A673 (cell line): ENCODE measurements at regions of chr3 and their contacts with region 1.

Region 1: DNA sequence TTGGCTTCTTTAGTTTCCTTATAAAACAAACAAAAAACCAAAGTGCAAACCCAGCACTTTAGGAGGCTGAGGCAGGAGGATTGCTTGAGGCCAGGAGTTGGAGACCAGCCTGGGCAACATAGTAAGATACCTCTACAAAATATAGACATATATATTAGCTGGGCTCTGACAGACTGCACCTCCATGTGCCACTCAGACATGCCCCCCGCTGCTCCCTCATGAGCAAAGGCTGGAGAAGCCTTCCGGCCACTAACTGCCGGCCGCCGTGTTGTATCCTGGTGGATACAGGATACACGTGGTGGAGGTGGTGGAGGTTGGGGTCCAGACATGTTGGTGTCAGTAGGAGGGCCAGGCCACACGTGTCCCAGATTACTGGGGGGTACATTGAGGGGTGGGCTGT is 29.4 kb upstream of the CCR4 start:
- DNase-seq: no peak
- H3K4me3 ChIP-seq: no peak overlapping the region
- H3K27ac ChIP-seq: no peak overlapping the region
- H3K4me1 ChIP-seq: no peaks in the 10 kb centered on the region
- H3K27me3 ChIP-seq: peaks cover 8% of the 10 kb centered on the region
- CTCF ChIP-seq: no peak

Region 2: DNA sequence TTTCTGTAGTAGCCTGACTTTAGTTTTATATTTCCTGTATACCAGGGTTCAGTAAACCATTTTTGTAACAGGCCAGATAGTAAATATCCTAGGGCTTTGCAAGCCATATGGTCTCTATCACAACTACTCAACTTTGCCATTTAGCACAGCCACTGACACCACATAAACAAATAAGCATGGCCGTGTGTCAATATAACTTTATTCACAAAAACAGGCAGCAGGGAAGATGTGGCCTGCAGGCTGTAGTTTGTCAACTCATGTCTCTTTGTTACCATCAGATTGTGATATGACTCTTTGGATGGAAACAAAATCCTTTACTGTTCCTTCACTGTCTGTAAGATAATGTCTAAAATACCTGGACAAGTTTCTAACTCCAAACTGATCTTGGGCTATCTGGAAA is 641.4 kb after region 1 on chr3:
- CTCF ChIA-PET with region 1: no interaction called
- POLR2A ChIA-PET with region 1: interaction called, 13 read pairs
- intact Hi-C with region 1: no loop called
- DNase-seq: no peak
- H3K4me3 ChIP-seq: no peak overlapping the region
- H3K27ac ChIP-seq: no peak overlapping the region
- H3K4me1 ChIP-seq: no peaks in the 10 kb centered on the region
- H3K27me3 ChIP-seq: no peaks in the 10 kb centered on the region
- CTCF ChIP-seq: no peak